AG04449 (cell line): ENCODE measurements at regions of chr1 and their contacts with region 1.

Region 1: GRCh38 chr1:119675349-119676345 is 27.6 kb upstream of the ZNF697 start:
- DNase-seq: peak; percentile 60
- H3K4me3 ChIP-seq: peak overlapping the region; percentile 48
- CTCF ChIP-seq: peak; percentile 60

Region 2: GRCh38 chr1:119603695-119604094 is 72.0 kb before region 1 on chr1:
- CTCF ChIA-PET with region 1: interaction called, 1,203 read pairs
- POLR2A ChIA-PET with region 1: no interaction called
- DNase-seq: no peak
- H3K4me3 ChIP-seq: no peak overlapping the region
- CTCF ChIP-seq: no peak

Region 3: DNA sequence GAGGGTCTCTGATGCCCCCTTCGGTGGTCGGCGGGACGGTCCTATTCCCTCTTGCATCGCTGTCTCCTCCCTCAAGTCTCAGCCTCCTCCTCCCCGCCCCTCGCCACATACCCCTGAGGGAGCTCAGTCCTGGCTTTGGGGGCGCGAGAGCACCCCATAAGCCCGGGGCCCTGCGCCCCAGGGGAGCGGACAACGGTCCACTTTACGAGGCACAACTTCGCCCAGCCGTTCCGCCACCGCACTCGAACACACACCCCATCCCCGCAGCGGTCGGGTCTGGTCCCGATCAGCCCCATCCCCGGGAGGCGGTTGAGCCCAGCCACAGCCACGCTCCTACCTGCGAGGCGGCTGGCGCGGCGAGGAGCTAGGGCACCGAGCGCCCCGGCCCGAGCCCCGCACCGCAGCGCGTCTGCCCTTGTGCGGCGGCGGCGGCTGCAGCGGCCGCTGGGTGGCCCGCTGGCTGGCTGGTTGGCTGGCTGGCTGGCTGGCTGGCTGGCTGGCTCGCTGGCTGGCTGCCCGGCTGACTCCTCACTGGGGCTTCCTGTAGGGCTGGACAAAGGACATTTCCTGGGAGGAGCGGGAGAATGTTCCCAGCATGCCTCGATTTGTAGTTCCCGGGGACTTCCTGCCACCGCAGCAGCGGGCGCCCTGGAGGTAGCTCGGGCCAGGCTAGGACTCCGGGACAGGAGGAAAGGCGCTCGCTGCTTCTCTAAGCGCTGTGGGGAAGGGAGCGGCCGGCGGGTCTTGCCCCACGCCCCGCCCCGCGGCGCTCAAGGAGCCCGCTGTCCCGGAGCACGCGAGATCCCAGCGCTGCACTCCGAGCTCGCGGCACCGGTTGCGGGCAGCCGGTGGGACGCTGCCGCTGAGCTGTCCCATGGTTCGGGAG is 27.7 kb before region 1 on chr1 and contains the start of gene ZNF697:
- CTCF ChIA-PET with region 1: interaction called, 298 read pairs
- POLR2A ChIA-PET with region 1: interaction called, 10 read pairs
- DNase-seq: peak; percentile 93
- H3K4me3 ChIP-seq: peak within 1 kb of the TSS; percentile 86
- CTCF ChIP-seq: peak; percentile 50

Region 4: DNA sequence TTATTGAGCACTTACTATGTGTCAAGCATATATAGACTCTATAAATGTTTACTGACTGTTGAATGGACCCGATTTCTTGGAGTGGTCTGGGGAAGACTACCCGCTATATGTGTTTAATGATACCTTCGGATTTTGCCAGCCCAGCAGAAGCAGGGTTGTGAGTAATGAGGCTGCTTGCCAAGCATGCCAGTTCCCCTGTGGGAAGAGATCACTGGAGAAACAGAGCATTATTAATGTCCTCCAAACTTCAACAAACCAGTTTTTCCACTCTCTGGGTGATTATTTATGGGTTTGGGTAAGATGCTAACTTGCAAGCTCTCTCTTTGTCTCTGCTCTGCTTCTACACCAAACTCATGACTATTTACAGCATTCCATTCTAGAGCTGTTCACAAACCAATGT is 11.0 kb after region 1 on chr1:
- CTCF ChIA-PET with region 1: interaction called, 85 read pairs
- POLR2A ChIA-PET with region 1: no interaction called
- DNase-seq: no peak
- H3K4me3 ChIP-seq: no peak overlapping the region
- CTCF ChIP-seq: no peak

Region 5: GRCh38 chr1:119697598-119697997 is 22.0 kb after region 1 on chr1:
- CTCF ChIA-PET with region 1: interaction called, 14 read pairs
- POLR2A ChIA-PET with region 1: no interaction called
- DNase-seq: no peak
- H3K4me3 ChIP-seq: no peak overlapping the region
- CTCF ChIP-seq: no peak

Region 6: GRCh38 chr1:119711804-119712341 is 36.2 kb after region 1 on chr1 and contains the start of gene PHGDH:
- CTCF ChIA-PET with region 1: interaction called, 10 read pairs
- POLR2A ChIA-PET with region 1: interaction called, 3 read pairs
- DNase-seq: peak; percentile 52
- H3K4me3 ChIP-seq: peak within 1 kb of the TSS; percentile 92
- CTCF ChIP-seq: no peak

Region 7: DNA sequence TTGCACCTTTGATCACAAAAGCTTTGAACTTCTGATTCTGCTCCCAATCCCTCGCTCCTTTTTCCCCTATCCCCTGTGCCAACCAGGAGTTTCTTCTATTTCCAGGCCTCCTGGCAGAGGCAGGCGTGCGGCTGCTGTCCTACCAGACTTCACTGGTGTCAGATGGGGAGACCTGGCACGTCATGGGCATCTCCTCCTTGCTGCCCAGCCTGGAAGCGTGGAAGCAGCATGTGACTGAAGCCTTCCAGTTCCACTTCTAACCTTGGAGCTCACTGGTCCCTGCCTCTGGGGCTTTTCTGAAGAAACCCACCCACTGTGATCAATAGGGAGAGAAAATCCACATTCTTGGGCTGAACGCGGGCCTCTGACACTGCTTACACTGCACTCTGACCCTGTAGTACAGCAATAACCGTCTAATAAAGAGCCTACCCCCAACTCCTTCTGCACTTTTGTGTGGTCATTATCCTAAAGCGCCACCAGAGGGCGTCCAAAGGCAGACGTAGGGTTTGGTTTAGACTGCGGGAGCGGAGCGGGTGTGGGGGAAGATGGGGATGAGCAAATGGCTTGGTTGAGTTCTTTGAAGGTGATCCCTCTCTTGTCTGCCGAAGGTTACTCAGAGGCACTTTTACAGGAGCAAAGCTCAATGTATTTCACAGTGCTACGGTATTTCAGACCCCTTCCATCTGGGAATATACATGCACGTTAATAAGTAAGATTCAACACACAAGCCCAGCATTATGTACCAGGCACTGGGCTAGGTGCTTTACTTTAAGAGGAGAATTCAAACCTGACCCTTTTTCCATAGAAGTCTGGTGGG is 68.3 kb after region 1 on chr1:
- CTCF ChIA-PET with region 1: interaction called, 15 read pairs
- POLR2A ChIA-PET with region 1: no interaction called
- DNase-seq: no peak
- H3K4me3 ChIP-seq: no peak overlapping the region
- CTCF ChIP-seq: peak; percentile 86